Dorsolateral prefrontal cortex (tissue), 120 donors: ENCODE measurements at regions of chr12 and their contacts with region 1.

Region 1: DNA sequence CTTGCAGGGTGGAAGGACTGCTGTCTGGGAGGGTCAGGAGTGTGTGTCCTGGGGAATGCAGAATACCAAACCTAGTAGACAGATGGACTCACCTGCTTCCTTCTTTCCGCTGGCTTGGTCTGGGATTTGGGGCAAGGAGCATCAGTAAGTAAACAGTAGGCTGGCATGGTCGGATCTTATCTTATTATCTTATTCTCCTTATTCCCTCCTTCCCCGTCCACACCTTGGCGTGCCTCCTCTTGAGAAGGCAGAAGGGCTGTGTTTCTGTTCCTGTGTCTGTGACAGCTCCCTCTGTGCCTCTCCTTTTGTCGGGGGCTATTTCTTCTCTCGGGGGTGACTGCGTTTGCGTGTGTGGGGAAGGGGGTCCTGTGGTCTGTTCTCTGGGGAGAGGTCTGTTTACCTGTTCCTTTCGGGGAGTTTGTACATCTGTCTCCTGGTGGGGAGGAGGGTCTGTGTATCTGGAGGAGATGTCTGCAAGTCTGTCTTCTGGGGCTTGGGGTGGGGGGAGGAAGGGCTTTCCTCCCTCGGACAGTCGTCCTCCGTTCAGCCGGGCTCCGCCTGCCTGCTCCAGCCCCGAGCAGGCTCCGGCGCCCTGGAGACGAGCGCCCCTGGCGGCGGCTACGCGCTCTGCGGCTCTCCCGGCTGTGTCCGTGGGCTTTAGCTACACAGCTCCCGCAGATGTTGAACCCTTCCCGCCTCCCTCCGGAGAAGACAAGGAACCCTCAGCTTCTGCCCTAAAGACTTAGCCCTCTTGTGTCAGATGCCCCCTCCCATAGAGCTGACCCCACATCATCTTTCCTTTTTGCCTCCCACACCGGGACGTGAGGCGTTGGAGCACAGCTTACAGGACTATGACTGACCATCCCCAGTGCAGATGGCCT is 4.3 kb downstream of the KRT86 start:
- DNase-seq: peak; percentile 66 to 89 (median 75)
- H3K4me3 ChIP-seq: peak overlapping the region in 48 of 59 donors; percentile 2 to 56 (median 36)
- H3K27ac ChIP-seq: peak overlapping the region in 2 of 59 donors; percentile 5 to 9
- H3K27me3 ChIP-seq: peaks cover 0 to 7% (median 0%) of the 10 kb centered on the region in 45 donors
- CTCF ChIP-seq: peak; percentile 74 to 98 (median 93)

Region 2: DNA sequence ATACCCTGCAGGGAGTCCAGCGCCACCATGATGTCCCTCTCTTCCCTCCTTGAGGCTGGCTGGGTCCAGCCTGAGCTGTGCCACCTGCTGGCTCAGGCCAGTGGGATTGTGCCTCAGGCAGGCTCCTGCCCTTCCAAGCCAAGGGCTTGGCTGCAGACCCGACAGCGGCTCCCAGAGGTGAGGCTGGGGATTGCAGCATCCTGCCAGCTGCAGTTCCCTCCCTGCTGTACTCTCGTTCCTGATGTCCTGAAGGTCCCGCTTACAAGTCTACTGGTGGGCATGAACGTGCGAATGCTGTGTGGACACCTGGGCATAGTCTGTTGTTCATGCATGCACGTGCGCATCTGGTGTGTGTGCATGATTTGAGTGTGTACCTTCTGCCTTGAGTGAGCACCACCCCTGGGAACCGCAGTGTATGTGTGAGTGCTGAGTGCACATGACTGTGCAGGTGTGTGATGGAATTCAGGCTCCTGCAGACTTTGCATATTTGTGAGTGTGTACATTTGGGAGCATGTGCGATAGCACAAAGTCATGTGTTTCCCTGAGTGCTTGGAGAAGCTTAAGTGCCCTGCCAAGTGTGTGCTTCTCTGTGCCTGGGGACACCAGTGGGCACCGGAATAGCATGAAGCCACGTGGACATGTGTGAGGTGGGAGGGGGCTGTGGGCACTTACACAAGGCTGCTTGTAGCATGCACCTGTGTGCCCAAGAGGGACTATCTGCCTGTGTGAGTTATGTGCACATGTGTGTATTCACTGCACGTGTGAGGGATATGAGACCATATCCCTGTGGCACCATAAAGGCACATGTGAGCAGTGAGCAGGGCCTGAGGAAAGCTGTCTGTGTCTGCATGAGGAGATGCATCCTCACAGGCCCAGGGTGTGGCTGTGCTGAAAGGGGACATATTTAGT is 65.0 kb before region 1 on chr12:
- intact Hi-C with region 1: loop called in 1 of 2 experiments (anchors 5 kb)
- DNase-seq: peak; percentile 35 to 82 (median 60)
- H3K4me3 ChIP-seq: no peak overlapping the region
- H3K27ac ChIP-seq: no peak overlapping the region
- H3K27me3 ChIP-seq: peaks cover 0 to 5% (median 0%) of the 10 kb centered on the region in 45 donors
- CTCF ChIP-seq: peak; percentile 38 to 98 (median 89)

Region 3: GRCh38 chr12:52321418-52321817 is 42.6 kb after region 1 on chr12:
- intact Hi-C with region 1: loop called in 1 of 2 experiments (anchors 5 kb)
- DNase-seq: peak in 3 of 10 donors; percentile 26 to 68 (median 54)
- H3K4me3 ChIP-seq: no peak overlapping the region
- H3K27ac ChIP-seq: no peak overlapping the region
- H3K27me3 ChIP-seq: peaks cover 0 to 19% (median 0%) of the 10 kb centered on the region in 45 donors
- CTCF ChIP-seq: peak in 2 of 56 donors; percentile 12 to 17

Region 4: GRCh38 chr12:52346593-52346992 is 67.8 kb after region 1 on chr12:
- intact Hi-C with region 1: no loop called
- DNase-seq: no peak
- H3K4me3 ChIP-seq: no peak overlapping the region
- H3K27ac ChIP-seq: peak overlapping the region in 3 of 59 donors; percentile 10 to 48 (median 31)
- H3K27me3 ChIP-seq: peaks cover 0 to 5% (median 0%) of the 10 kb centered on the region in 45 donors
- CTCF ChIP-seq: no peak